ENCODE measurements at regions of chr12 and their contacts with region 1.

Region 1: DNA sequence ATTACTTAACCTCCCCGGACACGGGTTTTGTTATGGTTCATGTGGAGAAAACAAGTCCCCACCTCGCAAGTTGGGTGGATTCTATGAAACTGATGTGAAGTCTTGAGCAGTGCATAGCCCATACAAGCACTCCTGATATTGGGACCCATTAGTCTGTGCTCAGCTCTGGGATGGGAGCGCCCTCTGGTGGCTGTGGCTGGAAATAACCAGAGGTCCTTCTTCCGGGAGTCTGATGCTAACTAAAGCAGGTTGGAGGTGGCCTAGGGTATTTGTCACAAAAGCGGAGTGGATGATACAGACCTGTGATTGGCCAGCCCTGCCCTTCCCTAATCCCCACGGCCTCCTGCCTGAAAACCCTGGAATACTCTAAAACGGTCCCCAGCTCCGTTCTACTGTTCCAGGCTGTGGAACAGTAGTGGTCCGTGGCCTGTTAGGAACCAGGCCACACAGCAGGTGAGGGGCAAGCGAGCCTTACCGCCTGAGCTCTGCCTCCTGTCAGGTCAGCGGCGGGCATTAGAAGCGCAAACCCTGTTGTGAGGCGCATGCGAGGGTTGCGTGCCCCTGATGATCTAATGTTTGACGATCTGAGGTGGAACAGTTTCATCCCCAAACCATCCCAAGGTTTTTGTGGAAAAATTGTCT is 6.4 kb downstream of the SLC48A1 start:
- DNase-seq: peak; percentile 79
- ATAC-seq: peak; percentile 83
- H3K4me3 ChIP-seq: no peak overlapping the region
- H3K27ac ChIP-seq: no peak overlapping the region
- H3K4me1 ChIP-seq: peaks cover 21% of the 10 kb centered on the region
- H3K27me3 ChIP-seq: no peaks in the 10 kb centered on the region
- CTCF ChIP-seq: peak; percentile 98
- POLR2A ChIP-seq: peak; percentile 35; the same call in 1 of the 2 replicates
- RAD21 ChIP-seq: peak; percentile 96

Region 2: DNA sequence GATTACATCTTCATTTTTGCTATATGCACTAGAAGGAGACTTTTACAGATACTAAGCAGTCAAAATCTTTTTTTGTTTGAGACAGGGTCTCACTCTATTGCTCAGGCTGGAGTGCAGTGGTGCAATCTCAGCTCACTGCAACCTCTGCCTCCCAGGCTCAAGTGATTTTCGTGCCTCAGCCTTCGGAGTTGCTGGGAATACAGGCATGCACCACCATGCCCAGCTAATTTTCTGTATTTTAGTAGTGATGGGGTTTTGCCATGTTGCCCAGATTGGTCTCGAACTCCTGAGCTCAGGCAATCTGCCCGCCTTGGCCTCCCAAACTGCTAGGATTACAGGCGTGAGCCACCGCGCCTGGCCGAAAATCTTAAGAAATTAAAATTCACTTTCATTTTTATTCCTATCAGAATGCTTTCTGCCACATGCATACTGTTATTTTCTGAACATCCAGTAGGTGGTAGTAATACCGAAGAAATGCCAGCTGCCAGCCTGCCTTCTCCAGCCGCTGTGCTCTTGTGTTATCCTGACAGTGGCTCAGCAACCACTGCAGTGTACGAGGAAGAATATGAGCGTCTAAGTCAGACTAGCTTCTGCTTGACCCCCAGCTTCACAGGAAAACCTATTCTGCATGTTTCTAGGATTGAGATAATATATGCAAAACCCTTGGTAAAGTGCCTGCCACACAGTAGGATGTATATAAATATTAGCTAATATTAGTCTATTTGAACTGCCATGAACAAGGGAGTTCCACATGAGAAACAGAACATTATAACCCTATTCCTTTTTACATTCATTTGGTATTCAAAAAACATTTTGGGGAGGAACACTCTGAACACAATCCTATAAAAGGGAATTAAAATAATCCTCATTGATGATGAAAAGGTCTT is 127.8 kb before region 1 on chr12:
- CTCF ChIA-PET with region 1: no interaction called
- POLR2A ChIA-PET with region 1: no interaction called
- dilution Hi-C with region 1: no loop called
- in situ Hi-C with region 1: no loop called
- intact Hi-C with region 1: loop called (anchors 5 kb)
- DNase-seq: peak; percentile 66
- ATAC-seq: peak; percentile 87
- H3K4me3 ChIP-seq: no peak overlapping the region
- H3K27ac ChIP-seq: no peak overlapping the region
- H3K4me1 ChIP-seq: peaks cover 6% of the 10 kb centered on the region
- H3K27me3 ChIP-seq: no peaks in the 10 kb centered on the region
- CTCF ChIP-seq: peak; percentile 61
- POLR2A ChIP-seq: no peak
- RAD21 ChIP-seq: peak; percentile 69

Region 3: GRCh38 chr12:47828608-47829536 is 49.5 kb after region 1 on chr12:
- CTCF ChIA-PET with region 1: no interaction called
- POLR2A ChIA-PET with region 1: no interaction called
- dilution Hi-C with region 1: no loop called
- in situ Hi-C with region 1: no loop called
- intact Hi-C with region 1: no loop called
- DNase-seq: peak; percentile 59
- ATAC-seq: peak; percentile 84
- H3K4me3 ChIP-seq: no peak overlapping the region
- H3K27ac ChIP-seq: peak overlapping the region; percentile 42
- H3K4me1 ChIP-seq: peaks cover 14% of the 10 kb centered on the region
- H3K27me3 ChIP-seq: no peaks in the 10 kb centered on the region
- CTCF ChIP-seq: no peak
- POLR2A ChIP-seq: no peak
- RAD21 ChIP-seq: no peak

Region 4: GRCh38 chr12:47844274-47845019 is 65.0 kb after region 1 on chr12:
- CTCF ChIA-PET with region 1: interaction called, 3 read pairs
- POLR2A ChIA-PET with region 1: no interaction called
- dilution Hi-C with region 1: loop called (anchors 10 kb)
- in situ Hi-C with region 1: no loop called
- intact Hi-C with region 1: no loop called
- DNase-seq: no peak
- ATAC-seq: no peak
- H3K4me3 ChIP-seq: no peak overlapping the region
- H3K27ac ChIP-seq: no peak overlapping the region
- H3K4me1 ChIP-seq: peaks cover 7% of the 10 kb centered on the region
- H3K27me3 ChIP-seq: no peaks in the 10 kb centered on the region
- CTCF ChIP-seq: no peak
- POLR2A ChIP-seq: no peak
- RAD21 ChIP-seq: no peak